Activated CD8-positive, alpha-beta T cell treated with anti-CD3 and anti-CD28 coated beads for 36 hours (primary cell): ENCODE measurements at regions of chr12 and their contacts with region 1.

Region 1: DNA sequence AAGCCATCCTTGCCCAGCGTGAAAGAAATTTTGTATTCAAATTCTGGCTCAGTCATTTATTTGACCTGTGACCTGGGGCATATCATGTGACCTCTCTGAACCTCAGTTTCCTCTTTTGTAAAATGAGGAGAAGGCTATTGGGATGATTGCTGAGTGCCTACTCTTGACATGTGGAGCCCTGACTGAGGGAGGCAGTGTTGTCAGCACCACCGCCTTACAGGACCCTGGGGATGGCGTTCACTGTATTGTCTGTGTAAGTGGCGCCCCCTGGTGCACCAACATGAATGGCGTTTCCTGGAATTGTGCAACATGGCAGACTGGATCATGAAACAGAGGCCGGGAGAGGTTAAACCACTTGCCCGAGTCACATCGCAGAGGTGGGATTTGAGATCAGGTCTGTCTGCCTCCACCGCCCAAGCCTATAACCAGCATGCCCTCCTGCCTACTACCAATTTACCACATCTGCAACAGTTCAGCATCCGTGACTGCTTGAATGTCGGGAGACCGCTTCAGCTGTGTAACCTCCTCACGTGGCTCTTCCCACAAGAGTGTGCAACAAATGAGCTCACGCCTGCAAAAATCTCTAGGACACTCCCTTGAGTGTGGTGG is 20.1 kb upstream of the CCDC63 start:
- DNase-seq: peak; percentile 96
- ATAC-seq: peak; percentile 98
- H3K4me3 Mint-ChIP-seq: peak overlapping the region; percentile 56
- H3K27ac Mint-ChIP-seq: no peak overlapping the region
- H3K4me1 Mint-ChIP-seq: peaks cover 7% of the 10 kb centered on the region
- H3K27me3 Mint-ChIP-seq: peaks cover 7% of the 10 kb centered on the region
- CTCF ChIP-seq: peak; percentile 92

Region 2: GRCh38 chr12:110613771-110614684 is 212.7 kb before region 1 on chr12 and contains the start of gene TCTN1:
- CTCF ChIA-PET with region 1: interaction called, 10 read pairs
- POLR2A ChIA-PET with region 1: no interaction called
- intact Hi-C with region 1: loop called (anchors 2 kb)
- DNase-seq: peak; percentile 98
- ATAC-seq: peak; percentile 100
- H3K4me3 Mint-ChIP-seq: peak within 1 kb of the TSS; percentile 83
- H3K27ac Mint-ChIP-seq: peak within 1 kb of the TSS; percentile 86
- H3K4me1 Mint-ChIP-seq: peaks cover 10% of the 10 kb centered on the region
- H3K27me3 Mint-ChIP-seq: no peaks in the 10 kb centered on the region
- CTCF ChIP-seq: no peak
- total RNA-seq, gene TCTN1: 7.9 to 8.6 TPM

Region 3: DNA sequence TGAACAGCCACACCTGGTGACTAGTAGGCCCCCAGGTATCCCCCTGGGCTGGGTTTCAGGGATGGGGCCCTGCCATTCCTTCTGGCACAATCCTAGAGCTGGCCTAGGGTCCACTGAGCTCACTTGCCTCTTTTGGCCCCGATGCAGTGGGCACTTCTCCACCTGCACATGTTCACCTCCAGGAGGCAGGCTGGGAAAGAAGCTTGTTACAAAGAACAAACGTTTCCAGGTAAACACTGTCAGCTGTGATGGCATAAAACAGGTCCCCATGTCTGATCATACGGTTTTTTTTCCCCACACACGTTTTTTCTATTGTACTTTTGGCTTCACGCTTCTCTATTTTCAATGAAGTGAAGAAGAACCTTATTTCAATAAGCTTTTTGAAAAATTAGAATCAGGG is 121.9 kb before region 1 on chr12:
- CTCF ChIA-PET with region 1: interaction called, 24 read pairs
- POLR2A ChIA-PET with region 1: no interaction called
- intact Hi-C with region 1: loop called (anchors 5 kb)
- DNase-seq: peak; percentile 38
- ATAC-seq: no peak
- H3K4me3 Mint-ChIP-seq: no peak overlapping the region
- H3K27ac Mint-ChIP-seq: no peak overlapping the region
- H3K4me1 Mint-ChIP-seq: no peaks in the 10 kb centered on the region
- H3K27me3 Mint-ChIP-seq: no peaks in the 10 kb centered on the region
- CTCF ChIP-seq: no peak

Region 4: DNA sequence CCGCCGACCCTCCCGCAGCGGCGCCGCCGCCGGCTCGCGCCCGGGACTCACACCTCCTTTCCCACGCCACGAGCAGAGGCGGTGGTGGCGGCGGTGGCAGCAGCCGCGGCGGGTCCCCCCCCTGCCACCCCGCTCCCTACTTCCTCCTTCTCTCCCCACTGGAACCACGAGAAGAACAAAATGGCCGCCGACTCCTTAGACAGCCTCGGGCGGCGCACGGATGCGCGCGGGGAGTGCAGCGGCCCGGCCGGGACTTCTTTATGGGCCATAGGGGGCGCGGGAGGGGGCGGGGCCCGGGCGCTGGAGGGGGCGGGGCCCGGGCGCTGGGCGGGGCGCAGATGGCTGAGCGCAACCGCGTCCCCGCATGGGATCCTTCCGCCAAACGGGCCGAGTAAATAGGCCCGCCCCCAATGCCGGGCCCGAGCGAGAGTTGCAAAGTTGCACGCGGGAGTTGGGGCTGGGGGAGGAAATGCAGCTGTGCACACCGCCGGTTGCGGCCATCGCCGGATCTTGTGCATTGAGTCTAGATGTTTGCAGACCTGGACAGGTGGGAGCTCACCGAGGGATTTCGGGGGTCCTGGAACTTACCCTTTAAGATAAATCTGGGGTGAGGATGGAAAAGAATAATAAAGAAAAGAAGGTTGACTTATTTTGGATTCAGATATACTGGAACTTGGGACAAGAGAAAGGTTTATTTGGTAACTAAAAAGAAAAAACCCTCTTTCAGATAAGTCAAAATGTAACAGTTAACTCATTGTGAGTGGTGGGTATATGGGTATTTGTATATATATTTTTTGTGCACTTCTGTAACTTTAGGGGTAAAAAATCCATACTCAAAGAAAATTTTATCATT is 83.8 kb before region 1 on chr12 and contains the start of gene PPP1CC:
- CTCF ChIA-PET with region 1: interaction called, 9 read pairs
- POLR2A ChIA-PET with region 1: interaction called, 3 read pairs
- intact Hi-C with region 1: loop called (anchors 5 kb)
- DNase-seq: peak; percentile 94
- ATAC-seq: peak; percentile 94
- H3K4me3 Mint-ChIP-seq: peak within 1 kb of the TSS; percentile 100
- H3K27ac Mint-ChIP-seq: peak within 1 kb of the TSS; percentile 99
- H3K4me1 Mint-ChIP-seq: peaks cover 38% of the 10 kb centered on the region
- H3K27me3 Mint-ChIP-seq: no peaks in the 10 kb centered on the region
- CTCF ChIP-seq: no peak
- total RNA-seq, gene PPP1CC: 242 to 244 TPM